ENCODE measurements at regions of chr2 and their contacts with region 1.

Region 1: GRCh38 chr2:200703127-200703925 is 108.4 kb upstream of the BZW1 start:
- DNase-seq: no peak
- ATAC-seq: no peak
- H3K4me3 ChIP-seq: no peak overlapping the region
- H3K27ac ChIP-seq: no peak overlapping the region
- H3K4me1 ChIP-seq: no peaks in the 10 kb centered on the region
- H3K27me3 ChIP-seq: no peaks in the 10 kb centered on the region

Region 2: DNA sequence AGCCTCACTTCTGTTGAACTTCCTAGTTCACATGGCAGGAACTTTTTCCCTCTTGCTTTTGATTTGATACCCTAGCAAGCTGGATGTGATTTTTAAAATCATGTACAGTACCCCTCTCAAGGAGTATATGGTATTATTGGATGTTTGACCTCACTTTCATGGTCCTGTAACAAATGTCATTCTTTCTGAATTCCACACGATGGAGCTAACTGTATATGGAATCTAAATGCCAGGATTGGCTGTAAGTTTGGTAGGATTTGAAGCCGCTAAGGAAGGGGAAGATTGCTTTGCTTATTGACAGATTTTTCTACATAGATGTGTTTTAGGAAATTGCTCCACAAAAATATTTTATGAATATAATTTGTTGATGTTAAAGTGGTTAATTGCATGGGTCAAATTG is 729.6 kb before region 1 on chr2:
- intact Hi-C with region 1: loop called in 1 of 2 experiments (anchors 5 kb)
- DNase-seq: no peak
- ATAC-seq: peak; percentile 62
- H3K4me3 ChIP-seq: no peak overlapping the region
- H3K27ac ChIP-seq: no peak overlapping the region
- H3K4me1 ChIP-seq: no peaks in the 10 kb centered on the region
- H3K27me3 ChIP-seq: no peaks in the 10 kb centered on the region

Region 3: GRCh38 chr2:200578778-200579177 is 124.5 kb before region 1 on chr2:
- intact Hi-C with region 1: loop called (anchors 2 to 5 kb)
- DNase-seq: no peak
- ATAC-seq: no peak
- H3K4me3 ChIP-seq: no peak overlapping the region
- H3K27ac ChIP-seq: no peak overlapping the region
- H3K4me1 ChIP-seq: no peaks in the 10 kb centered on the region
- H3K27me3 ChIP-seq: no peaks in the 10 kb centered on the region